Endothelial cell of umbilical vein (primary cell): ENCODE measurements at regions of chr14 and their contacts with region 1.

Region 1: GRCh38 chr14:91177073-91178034 is 63.5 kb downstream of the DGLUCY start:
- DNase-seq: peak; percentile 88
- H3K4me3 ChIP-seq: no peak overlapping the region
- H3K27ac ChIP-seq: no peak overlapping the region
- H3K4me1 ChIP-seq: peaks cover 4% of the 10 kb centered on the region
- H3K27me3 ChIP-seq: no peaks in the 10 kb centered on the region
- CTCF ChIP-seq: peak; percentile 69 to 74
- POLR2A ChIP-seq: no peak

Region 2: GRCh38 chr14:90894241-90894640 is 283.1 kb before region 1 on chr14:
- CTCF ChIA-PET with region 1: interaction called, 14 read pairs
- POLR2A ChIA-PET with region 1: no interaction called
- dilution Hi-C with region 1: no loop called
- intact Hi-C with region 1: no loop called
- DNase-seq: no peak
- H3K4me3 ChIP-seq: no peak overlapping the region
- H3K27ac ChIP-seq: no peak overlapping the region
- H3K4me1 ChIP-seq: no peaks in the 10 kb centered on the region
- H3K27me3 ChIP-seq: no peaks in the 10 kb centered on the region
- CTCF ChIP-seq: no peak
- POLR2A ChIP-seq: no peak

Region 3: GRCh38 chr14:91114079-91115065 is 63.0 kb before region 1 on chr14:
- CTCF ChIA-PET with region 1: interaction called, 24 read pairs
- POLR2A ChIA-PET with region 1: no interaction called
- dilution Hi-C with region 1: no loop called
- intact Hi-C with region 1: loop called (anchors 2 kb)
- DNase-seq: peak; percentile 91
- H3K4me3 ChIP-seq: peak overlapping the region; percentile 25 to 66 (median 31)
- H3K27ac ChIP-seq: peak overlapping the region; percentile 79
- H3K4me1 ChIP-seq: peaks cover 42% of the 10 kb centered on the region
- H3K27me3 ChIP-seq: no peaks in the 10 kb centered on the region
- CTCF ChIP-seq: no peak
- POLR2A ChIP-seq: peak; percentile 68

Region 4: GRCh38 chr14:91193069-91193468 is 15.7 kb after region 1 on chr14:
- CTCF ChIA-PET with region 1: interaction called, 17 read pairs
- POLR2A ChIA-PET with region 1: no interaction called
- dilution Hi-C with region 1: no loop called
- intact Hi-C with region 1: no loop called
- DNase-seq: no peak
- H3K4me3 ChIP-seq: no peak overlapping the region
- H3K27ac ChIP-seq: no peak overlapping the region
- H3K4me1 ChIP-seq: no peaks in the 10 kb centered on the region
- H3K27me3 ChIP-seq: no peaks in the 10 kb centered on the region
- CTCF ChIP-seq: no peak
- POLR2A ChIP-seq: no peak

Region 5: DNA sequence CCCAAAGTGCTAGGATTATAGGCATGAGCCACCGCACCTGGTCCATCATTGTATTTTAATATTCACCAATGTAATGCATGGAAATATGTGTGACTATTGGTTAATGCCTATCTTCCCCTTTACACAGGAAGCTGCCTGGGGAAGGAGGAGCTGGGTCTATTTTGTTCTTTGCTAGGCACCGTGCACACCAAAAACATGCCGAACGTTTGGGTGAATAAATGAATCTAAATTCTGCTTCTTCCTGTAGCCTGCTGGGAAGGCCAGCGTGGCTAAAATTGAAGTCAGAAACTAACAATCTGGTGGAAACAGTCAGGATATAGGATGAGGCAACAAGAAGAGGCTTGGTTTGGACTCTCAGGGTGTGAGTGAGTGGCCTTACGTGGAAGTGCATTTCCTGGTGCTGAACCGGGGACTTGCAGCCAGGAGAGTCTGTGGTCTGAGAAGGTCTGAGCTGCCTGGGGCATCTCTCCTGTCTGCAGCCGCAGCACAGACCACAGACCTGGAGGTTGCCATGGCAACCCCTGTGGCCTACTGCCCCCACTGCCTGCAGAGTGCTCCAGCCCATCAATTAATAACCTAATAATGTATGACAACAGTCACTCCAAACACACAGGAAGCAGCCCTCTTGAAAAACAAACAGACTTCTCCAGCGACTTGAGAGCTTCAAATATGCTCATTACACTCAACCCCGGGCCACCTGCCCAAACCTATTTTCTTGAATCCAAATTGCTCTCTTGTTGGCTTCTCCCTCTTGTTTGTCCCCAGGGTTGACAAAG is 72.7 kb after region 1 on chr14:
- CTCF ChIA-PET with region 1: interaction called, 16 read pairs
- POLR2A ChIA-PET with region 1: no interaction called
- dilution Hi-C with region 1: no loop called
- intact Hi-C with region 1: no loop called
- DNase-seq: no peak
- H3K4me3 ChIP-seq: no peak overlapping the region
- H3K27ac ChIP-seq: no peak overlapping the region
- H3K4me1 ChIP-seq: peaks cover 2% of the 10 kb centered on the region
- H3K27me3 ChIP-seq: no peaks in the 10 kb centered on the region
- CTCF ChIP-seq: no peak
- POLR2A ChIP-seq: no peak

Region 6: GRCh38 chr14:91286530-91286937 is 109.2 kb after region 1 on chr14:
- CTCF ChIA-PET with region 1: interaction called, 220 read pairs
- POLR2A ChIA-PET with region 1: interaction called, 8 read pairs
- dilution Hi-C with region 1: no loop called
- intact Hi-C with region 1: loop called (anchors 1 kb)
- DNase-seq: peak; percentile 82
- H3K4me3 ChIP-seq: no peak overlapping the region
- H3K27ac ChIP-seq: no peak overlapping the region
- H3K4me1 ChIP-seq: no peaks in the 10 kb centered on the region
- H3K27me3 ChIP-seq: no peaks in the 10 kb centered on the region
- CTCF ChIP-seq: peak; percentile 73 to 84
- POLR2A ChIP-seq: no peak